GM10248 (cell line): ENCODE measurements at regions of chr7 and their contacts with region 1.

Region 1: GRCh38 chr7:108246227-108246837 is 116.2 kb upstream of the LAMB4 start:
- DNase-seq: no peak
- CTCF ChIP-seq: peak; percentile 19

Region 2: GRCh38 chr7:108235451-108236061 is 10.8 kb before region 1 on chr7:
- CTCF ChIA-PET with region 1: interaction called, 10 read pairs
- POLR2A ChIA-PET with region 1: no interaction called
- DNase-seq: no peak
- CTCF ChIP-seq: no peak